ENCODE measurements at regions of chr15 and their contacts with region 1.

Region 1: GRCh38 chr15:43531018-43531670 is 13.7 kb downstream of the MAP1A start:
- DNase-seq: no peak
- H3K4me3 ChIP-seq: no peak overlapping the region
- H3K4me3 Mint-ChIP-seq: no peak overlapping the region
- H3K27ac Mint-ChIP-seq: no peak overlapping the region
- H3K4me1 ChIP-seq: no peaks in the 10 kb centered on the region
- H3K4me1 Mint-ChIP-seq: no peaks in the 10 kb centered on the region
- H3K27me3 ChIP-seq: no peaks in the 10 kb centered on the region
- H3K27me3 Mint-ChIP-seq: no peaks in the 10 kb centered on the region
- CTCF ChIP-seq: no peak

Region 2: DNA sequence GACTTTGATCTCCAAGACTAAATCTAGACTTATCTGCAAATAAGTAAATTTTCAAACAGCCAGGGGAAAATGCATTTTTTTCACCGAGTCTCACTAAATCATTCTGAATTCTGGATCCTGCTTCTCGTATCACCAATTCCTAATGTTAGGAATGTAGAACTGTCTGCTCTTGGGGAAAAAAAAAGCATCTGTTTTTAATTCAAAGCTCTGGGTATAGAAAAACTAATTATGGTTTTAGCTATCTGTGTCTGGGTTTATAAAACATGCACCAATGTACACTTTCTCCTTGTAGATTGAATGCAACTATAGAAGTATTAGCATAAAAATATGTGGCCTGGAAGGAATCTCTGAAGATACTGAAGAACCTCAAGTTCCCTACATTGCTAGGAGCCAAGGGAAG is 789.4 kb before region 1 on chr15:
- CTCF ChIA-PET with region 1: interaction called, 10 read pairs
- POLR2A ChIA-PET with region 1: no interaction called
- intact Hi-C with region 1: no loop called
- DNase-seq: no peak
- H3K4me3 ChIP-seq: no peak overlapping the region
- H3K4me3 Mint-ChIP-seq: no peak overlapping the region
- H3K27ac Mint-ChIP-seq: no peak overlapping the region
- H3K4me1 ChIP-seq: no peaks in the 10 kb centered on the region; the same call in 1 of the 2 replicates
- H3K4me1 Mint-ChIP-seq: no peaks in the 10 kb centered on the region
- H3K27me3 ChIP-seq: no peaks in the 10 kb centered on the region
- H3K27me3 Mint-ChIP-seq: no peaks in the 10 kb centered on the region
- CTCF ChIP-seq: no peak

Measured in Caco-2 (cell line).